Activated T-helper 2 cell treated with anti-CD3 and anti-CD28 coated beads, Interferon-gamma antibody, Interleukin-2, Interleukin-4, amounts not matched to agents 10 μg/mL and 5 μg/mL and 100 μg/mL, durations not matched to agents 14 hours and 24 hours and 36 hours (primary cell): ENCODE measurements at regions of chr7 and their contacts with region 1.

Region 1: DNA sequence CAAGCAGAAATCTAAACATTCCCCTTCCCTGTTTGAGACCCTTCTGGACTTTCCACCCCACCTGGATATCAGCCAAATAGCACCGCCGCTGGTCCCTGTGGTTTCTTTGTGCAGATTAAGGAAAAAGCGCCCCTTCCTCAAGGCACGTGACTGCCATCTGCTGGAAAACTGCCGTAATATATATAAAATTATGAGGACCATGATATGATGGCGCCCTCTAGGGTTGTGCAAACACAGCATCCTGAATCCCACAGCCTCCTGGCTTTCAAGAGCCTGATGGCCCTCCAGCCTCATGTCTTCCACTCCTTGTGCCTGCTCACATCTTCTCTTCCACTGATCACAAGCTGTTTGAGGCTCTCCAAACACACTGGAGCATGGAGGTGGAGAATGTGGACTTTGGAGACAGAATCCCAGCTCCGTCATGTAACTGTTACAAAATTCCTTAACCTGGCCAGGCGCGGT is 121.3 kb downstream of the MYL10 start:
- DNase-seq: peak; percentile 27
- H3K4me3 Mint-ChIP-seq: peak overlapping the region; percentile 46
- H3K27ac Mint-ChIP-seq: no peak overlapping the region
- H3K4me1 Mint-ChIP-seq: peaks cover 25% of the 10 kb centered on the region
- H3K27me3 Mint-ChIP-seq: peaks cover 5% of the 10 kb centered on the region

Region 2: DNA sequence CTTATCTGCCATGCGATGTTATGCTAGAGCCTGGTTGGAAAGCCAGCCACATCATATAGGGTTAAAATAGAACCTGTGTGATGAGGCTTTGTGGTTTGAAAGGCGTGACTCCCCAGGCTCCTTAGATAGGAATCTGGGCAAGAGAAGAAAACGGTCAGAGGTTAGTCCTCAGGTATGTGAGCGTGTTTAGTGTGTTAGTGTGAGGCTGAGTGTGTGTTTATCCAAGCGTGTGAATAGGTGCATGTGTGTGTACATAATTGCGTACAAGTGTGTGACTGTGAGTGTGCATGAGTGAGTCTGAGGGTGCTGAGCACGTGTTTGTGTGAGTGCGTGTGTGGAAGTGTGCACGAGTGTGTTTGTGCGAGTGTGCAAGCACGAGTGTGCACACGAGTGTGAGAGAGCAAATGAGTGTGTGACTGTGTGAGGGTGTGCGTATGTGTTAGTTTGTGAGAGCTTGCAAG is 65.3 kb before region 1 on chr7:
- intact Hi-C with region 1: loop called (anchors 10 kb)
- DNase-seq: no peak
- H3K4me3 Mint-ChIP-seq: no peak overlapping the region
- H3K27ac Mint-ChIP-seq: no peak overlapping the region
- H3K4me1 Mint-ChIP-seq: peaks cover 13% of the 10 kb centered on the region
- H3K27me3 Mint-ChIP-seq: peaks cover 7% of the 10 kb centered on the region

Region 3: DNA sequence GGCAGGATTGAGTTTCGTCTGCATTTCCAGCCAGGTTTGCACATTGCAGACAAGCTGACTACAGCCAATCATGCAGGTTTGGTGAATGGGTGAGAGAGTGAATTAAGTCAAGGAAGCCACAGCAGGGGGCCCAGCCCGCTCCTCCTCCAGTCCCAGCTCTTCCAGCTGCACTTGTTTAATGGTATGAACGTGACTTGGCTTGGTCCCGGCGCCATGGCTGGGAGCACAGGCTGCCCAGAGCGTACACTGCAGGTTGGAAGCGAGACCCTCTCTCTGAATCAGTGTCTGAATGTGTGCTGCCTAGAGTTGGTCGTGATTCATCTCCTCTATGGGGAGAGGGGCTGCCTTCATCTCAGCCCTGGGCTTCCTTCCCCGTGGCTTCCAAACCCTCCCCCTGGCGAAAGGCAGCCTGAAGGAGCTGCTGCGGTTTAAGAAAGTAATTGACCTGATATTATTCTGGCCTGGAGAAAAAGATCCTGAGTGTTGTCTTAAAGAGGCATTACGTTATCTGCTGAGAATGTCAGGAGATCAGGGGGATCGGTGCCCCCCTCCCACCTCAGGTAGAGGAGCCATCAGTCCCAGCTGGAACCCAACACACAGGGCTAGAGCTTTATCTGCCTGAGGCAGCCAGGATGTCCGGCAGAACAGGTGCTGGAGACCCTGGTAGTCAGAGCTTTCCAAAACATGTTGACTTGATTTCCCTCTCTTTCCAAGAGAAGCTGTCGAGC is 13.1 kb before region 1 on chr7:
- intact Hi-C with region 1: no loop called
- DNase-seq: no peak
- H3K4me3 Mint-ChIP-seq: no peak overlapping the region
- H3K27ac Mint-ChIP-seq: no peak overlapping the region
- H3K4me1 Mint-ChIP-seq: no peaks in the 10 kb centered on the region
- H3K27me3 Mint-ChIP-seq: no peaks in the 10 kb centered on the region

Region 4: GRCh38 chr7:101688183-101688831 is 180.5 kb after region 1 on chr7:
- intact Hi-C with region 1: no loop called
- DNase-seq: peak; percentile 71
- H3K4me3 Mint-ChIP-seq: no peak overlapping the region
- H3K27ac Mint-ChIP-seq: no peak overlapping the region
- H3K4me1 Mint-ChIP-seq: peaks cover 5% of the 10 kb centered on the region
- H3K27me3 Mint-ChIP-seq: no peaks in the 10 kb centered on the region